Posterior vena cava (tissue), 2 donors: ENCODE measurements at regions of chr6 and their contacts with region 1.

Region 1: DNA sequence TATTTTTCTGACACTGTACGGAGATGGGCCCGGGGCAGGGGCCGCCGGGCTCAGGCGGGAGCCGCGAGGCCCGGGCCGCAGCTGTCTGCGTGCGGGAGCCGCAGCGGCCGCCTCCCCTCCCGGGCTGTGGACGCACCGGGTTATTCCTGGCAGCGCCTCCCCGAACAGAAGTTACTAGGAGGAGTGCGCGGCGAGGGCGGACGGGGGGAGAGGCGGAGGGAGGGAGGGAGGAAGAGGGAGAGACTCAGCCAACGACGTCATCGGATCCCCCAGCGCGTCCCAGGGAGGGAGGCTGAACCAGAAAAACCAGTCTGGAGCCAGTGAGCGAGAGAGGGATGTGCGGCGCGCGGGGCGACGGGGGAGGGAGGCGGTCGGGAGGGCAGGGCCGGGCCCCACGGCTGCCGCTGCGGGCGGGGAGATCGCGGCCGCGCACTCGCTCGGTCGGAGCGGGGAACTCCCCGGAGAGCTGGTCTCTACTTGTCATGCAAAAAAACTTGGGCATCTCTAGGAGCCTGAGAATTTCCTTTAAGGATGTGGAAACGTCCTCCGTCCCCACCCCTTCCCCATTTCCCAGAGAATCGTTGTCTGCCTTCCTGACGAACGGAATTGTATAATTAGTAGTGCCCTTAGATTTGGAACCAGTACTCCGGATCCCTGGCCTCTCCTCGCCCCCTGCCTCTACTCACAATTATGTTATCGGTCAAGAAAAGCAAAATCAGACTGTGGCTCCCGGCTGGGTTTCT is 1.4 kb upstream of the HIVEP2 start:
- DNase-seq: peak; percentile 99

Region 2: DNA sequence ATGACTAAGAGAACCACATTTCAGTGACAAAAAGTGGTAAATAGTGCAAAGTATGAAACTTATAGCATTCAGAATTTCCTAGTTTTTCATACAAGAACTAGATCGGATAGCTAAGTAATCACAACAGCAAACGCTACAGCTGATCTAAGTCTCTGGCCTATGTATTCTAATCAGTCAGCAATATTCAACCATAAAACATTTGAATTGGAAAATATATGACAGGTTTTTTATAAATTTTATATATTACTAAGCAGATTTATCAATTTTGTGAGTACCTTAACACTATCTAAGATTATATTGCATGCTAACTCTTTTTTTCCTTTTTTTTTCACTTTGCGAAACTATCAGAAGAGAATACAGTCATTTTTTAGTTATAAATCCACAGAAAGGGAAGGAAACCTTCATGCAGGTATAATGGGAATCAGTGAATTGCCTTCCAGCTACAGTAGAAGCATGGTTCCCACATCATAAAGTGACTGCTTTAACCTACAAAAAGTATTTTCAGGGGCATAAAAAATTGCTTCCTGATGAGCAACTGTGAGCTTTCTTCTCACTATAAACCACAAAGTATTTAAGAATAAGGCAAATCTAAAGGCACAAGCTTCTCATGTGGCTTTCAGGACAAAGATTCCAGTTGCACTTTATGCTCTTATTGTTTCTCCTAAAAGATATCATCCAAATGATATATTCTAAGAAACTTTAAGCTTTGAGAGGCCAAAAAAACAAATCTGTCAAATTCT is 887.6 kb before region 1 on chr6:
- intact Hi-C with region 1: no loop called
- DNase-seq: no peak

Region 3: DNA sequence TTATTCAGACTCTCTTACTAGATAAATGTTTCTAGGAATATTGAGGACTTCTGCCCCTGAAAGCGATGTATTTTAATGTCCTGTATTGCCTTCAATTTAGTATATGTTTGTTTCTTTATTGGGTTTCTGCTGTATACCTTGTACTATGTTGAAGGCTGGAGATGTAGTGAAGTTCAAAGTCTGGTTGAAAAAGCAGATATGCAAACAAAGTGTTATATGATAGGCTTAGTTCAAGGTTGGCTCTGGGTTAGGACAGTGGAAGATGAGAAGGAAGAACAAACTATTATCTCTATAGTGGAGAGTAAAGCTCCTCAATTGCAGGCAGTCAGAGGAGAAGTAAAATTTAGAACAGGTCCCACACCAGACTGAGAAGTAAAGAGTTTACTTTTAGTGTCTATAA is 680.9 kb before region 1 on chr6:
- intact Hi-C with region 1: no loop called
- DNase-seq: no peak

Region 4: GRCh38 chr6:142845624-142846458 is 100.5 kb before region 1 on chr6:
- intact Hi-C with region 1: loop called in 1 of 2 experiments (anchors 10 kb)
- DNase-seq: peak; percentile 90

Region 5: GRCh38 chr6:142885182-142885867 is 61.0 kb before region 1 on chr6:
- intact Hi-C with region 1: loop called in 1 of 2 experiments (anchors 10 kb)
- DNase-seq: no peak